Spleen (tissue), 13 donors: ENCODE measurements at regions of chr2 and their contacts with region 1.

Region 1: DNA sequence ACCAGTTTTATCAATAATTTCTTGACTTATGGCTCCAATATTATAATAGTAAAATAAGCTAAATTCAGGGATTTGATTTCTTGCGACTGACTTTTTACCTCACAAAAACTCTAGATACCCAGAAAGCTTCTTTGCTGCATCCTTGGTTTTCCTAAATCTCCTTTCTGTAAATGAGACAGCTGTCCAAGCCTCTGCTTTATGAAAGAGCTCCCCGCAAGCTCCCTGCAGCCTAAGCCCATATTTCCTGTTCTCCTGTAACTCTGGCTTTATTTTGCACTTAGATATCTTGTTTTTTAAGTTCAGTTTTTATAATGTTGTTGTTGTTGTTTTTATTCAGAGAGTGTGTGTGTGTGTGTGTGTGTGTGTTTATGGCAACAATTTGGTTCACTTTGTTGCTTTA is 361.7 kb upstream of the PKDCC start:
- DNase-seq: no peak
- H3K4me3 ChIP-seq: no peak overlapping the region
- H3K27ac ChIP-seq: no peak overlapping the region
- H3K4me1 ChIP-seq: no peaks in the 10 kb centered on the region
- H3K27me3 ChIP-seq: no peaks in the 10 kb centered on the region
- CTCF ChIP-seq: no peak
- POLR2A ChIP-seq: no peak

Region 2: GRCh38 chr2:41431756-41432155 is 254.4 kb before region 1 on chr2:
- intact Hi-C with region 1: loop called (anchors 10 kb)
- DNase-seq: no peak
- H3K4me3 ChIP-seq: no peak overlapping the region
- H3K27ac ChIP-seq: no peak overlapping the region
- H3K4me1 ChIP-seq: no peaks in the 10 kb centered on the region
- H3K27me3 ChIP-seq: no peaks in the 10 kb centered on the region
- CTCF ChIP-seq: no peak
- POLR2A ChIP-seq: no peak

Region 3: DNA sequence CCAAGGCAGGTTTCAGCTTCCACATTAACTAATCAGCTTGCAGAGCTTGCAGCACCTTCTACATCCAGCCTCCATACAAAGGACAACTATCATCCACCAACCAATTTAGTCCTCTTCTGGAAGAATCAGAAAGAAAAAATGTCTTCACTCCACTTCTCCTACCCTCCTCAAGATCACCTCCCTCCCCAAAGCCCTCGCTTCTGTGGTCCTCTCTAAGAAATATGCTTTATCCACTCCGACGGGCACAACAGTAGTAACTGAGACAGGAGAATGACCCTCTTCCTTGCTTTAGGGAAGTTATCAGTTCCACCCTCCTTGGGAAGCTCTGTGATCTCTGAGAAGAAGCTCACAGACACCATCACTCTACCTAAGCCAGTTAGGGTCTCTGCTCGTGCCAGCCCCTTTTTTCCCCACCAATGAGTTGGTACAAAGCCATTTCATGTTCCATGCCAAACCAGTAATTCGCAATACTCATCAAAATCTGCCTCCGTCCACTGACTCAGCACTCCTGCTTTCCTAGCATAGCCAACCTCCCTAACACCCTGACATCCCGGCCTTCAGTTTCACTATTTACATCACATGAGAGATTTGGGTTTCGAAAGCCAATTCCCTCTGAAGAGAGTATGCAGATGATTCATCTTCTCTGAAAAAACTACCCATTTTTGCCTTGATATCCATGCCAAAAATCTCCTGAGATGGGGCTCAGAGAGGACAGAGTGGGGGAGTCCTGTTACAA is 247.6 kb after region 1 on chr2:
- intact Hi-C with region 1: no loop called
- DNase-seq: no peak
- H3K4me3 ChIP-seq: no peak overlapping the region
- H3K27ac ChIP-seq: peak overlapping the region in 7 of 8 donors; percentile 3 to 74 (median 59)
- H3K4me1 ChIP-seq: peaks cover 0 to 19% (median 5%) of the 10 kb centered on the region in 6 donors
- H3K27me3 ChIP-seq: peaks cover 0 to 6% (median 0%) of the 10 kb centered on the region in 7 donors
- CTCF ChIP-seq: no peak
- POLR2A ChIP-seq: no peak